Endothelial cell of umbilical vein (primary cell): ENCODE measurements at regions of chr3 and their contacts with region 1.

Region 1: DNA sequence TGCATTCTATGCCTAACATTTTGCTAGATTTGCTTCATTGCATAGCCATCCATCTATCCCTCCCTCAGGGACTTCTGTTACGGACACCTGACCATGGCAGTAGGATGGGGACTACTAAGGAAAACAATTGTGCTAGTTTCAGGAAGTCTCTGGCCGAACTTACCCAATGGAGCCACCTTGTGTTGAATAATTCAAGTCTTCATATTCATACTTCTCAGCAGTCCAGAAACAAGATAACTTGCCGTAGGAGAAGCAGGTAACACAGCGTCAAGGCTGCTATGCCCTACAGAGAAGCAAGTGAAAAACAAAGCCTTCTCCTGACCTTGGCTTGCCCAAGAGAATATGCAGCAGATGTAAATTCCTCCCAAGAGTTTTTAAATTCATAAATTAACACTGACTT is 685.3 kb downstream of the GRM7 start:
- DNase-seq: peak; percentile 79
- H3K4me3 ChIP-seq: no peak overlapping the region
- H3K27ac ChIP-seq: no peak overlapping the region
- H3K4me1 ChIP-seq: no peaks in the 10 kb centered on the region
- H3K27me3 ChIP-seq: no peaks in the 10 kb centered on the region
- CTCF ChIP-seq: peak; percentile 6 to 13
- POLR2A ChIP-seq: no peak

Region 2: GRCh38 chr3:6994081-6994668 is 552.1 kb before region 1 on chr3:
- CTCF ChIA-PET with region 1: no interaction called
- POLR2A ChIA-PET with region 1: no interaction called
- dilution Hi-C with region 1: no loop called
- intact Hi-C with region 1: loop called (anchors 10 kb)
- DNase-seq: peak; percentile 57
- H3K4me3 ChIP-seq: no peak overlapping the region
- H3K27ac ChIP-seq: no peak overlapping the region
- H3K4me1 ChIP-seq: no peaks in the 10 kb centered on the region
- H3K27me3 ChIP-seq: no peaks in the 10 kb centered on the region
- CTCF ChIP-seq: peak; percentile 9 to 23
- POLR2A ChIP-seq: no peak